ENCODE measurements at regions of chr18 and their contacts with region 1.

Region 1: DNA sequence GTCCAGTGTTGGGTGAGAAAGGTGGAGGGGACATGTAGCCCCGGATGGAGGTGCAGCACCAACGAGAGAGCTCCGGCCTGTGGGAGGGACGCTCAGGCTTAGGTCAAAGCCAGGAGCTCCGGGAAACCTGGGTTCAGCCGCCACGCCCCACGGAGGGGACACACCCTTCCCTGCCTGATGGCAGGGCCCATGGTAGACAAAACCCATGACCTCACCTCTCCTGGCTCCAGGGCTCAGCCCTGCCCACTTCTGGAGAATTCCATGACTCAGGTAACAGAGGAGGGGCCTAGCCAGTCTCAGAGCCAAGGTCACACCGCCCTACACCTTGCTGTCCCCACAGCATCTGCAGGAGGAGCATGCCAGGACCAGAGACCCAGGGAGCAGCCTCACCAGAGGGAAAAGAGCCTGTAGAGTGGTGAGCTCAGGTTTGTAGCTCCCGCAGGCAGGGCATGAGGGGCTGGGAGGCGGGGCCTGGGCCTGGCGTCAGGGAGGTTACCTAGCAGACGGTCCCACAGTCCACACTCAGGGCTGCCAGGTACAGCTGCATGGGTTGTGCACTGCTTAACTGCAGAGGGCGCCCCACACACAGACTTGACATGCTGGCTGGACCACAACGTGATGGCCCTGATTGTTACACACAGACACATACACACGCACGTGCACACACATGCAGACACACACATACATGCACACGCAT is 70.8 kb upstream of the SMAD7 start:
- DNase-seq: peak; percentile 15
- ATAC-seq: peak; percentile 87
- H3K4me3 ChIP-seq: no peak overlapping the region
- H3K27ac ChIP-seq: no peak overlapping the region
- H3K4me1 ChIP-seq: no peaks in the 10 kb centered on the region; the same call in 1 of the 2 replicates
- H3K27me3 ChIP-seq: no peaks in the 10 kb centered on the region
- CTCF ChIP-seq: peak; percentile 58 to 60 (median 59); a peak in 5 of 6 replicates
- EP300 ChIP-seq: no peak
- POLR2A ChIP-seq: no peak
- RAD21 ChIP-seq: peak; percentile 69

Region 2: DNA sequence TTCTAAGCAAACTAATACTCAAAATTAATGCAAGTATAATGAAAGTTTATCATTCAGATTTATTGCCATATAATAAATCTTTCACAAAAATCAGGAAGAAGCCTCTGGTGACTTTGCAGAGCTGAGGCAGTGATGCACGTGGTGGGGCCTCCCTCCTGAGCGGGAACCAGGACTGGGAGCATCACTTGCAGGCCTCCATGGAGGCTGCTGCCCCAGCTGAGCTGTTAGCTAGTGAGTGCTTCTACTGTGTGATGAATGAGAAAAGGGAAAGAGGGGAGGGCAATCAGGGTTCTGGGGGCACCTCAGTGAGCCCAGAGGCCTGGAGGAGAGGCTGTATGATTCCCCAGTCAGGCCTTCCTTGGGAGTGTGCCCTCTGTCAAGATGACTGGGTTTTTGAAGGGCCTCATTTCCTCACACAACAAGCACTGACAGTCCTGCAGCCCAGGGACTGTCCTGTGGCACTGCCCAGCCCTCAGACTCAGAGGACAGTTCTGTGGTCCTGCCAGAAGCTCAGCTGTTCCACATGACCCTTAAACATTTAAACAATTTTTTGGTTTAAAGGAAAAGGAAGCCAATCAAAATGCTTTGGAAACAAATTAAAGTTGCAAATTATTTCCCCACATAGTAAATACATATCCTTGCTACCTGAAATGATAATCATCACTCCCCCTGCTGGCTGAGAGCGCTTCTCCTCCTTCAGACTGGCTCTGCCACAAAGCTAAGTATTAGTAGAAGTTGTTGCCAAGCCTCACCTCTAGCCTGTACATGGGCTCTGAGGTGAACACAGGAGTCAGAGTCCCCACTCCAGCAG is 20.1 kb after region 1 on chr18:
- CTCF ChIA-PET with region 1: interaction called, 13 read pairs
- POLR2A ChIA-PET with region 1: no interaction called
- RAD21 ChIA-PET with region 1: no interaction called
- SMC1A ChIA-PET with region 1: no interaction called
- in situ Hi-C with region 1: no loop called
- intact Hi-C with region 1: no loop called
- DNase-seq: no peak
- ATAC-seq: peak; percentile 75
- H3K4me3 ChIP-seq: no peak overlapping the region
- H3K27ac ChIP-seq: no peak overlapping the region
- H3K4me1 ChIP-seq: no peaks in the 10 kb centered on the region
- H3K27me3 ChIP-seq: no peaks in the 10 kb centered on the region
- CTCF ChIP-seq: peak; percentile 49 to 56 (median 53); a peak in 5 of 6 replicates
- EP300 ChIP-seq: no peak
- POLR2A ChIP-seq: no peak
- RAD21 ChIP-seq: peak; percentile 51

Region 3: DNA sequence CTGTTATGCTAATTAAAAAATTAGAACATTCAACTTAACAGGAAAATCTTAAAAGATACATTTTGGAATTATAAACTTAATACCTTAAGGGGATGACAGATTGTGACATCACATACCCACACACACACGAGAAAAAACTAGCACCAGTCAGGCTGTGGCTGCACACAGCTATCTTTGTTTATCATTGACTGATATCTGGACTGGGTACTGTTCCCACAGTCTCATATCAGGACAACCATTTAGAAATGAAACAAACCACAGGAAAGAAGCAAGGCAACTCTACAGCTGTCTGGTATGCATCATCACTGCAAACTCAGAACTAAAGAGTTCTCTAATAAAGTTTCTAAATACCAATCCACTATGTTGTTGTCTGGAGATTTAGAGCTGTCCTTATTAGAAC is 140.0 kb after region 1 on chr18:
- CTCF ChIA-PET with region 1: interaction called, 6 read pairs
- POLR2A ChIA-PET with region 1: no interaction called
- RAD21 ChIA-PET with region 1: interaction called, 4 read pairs
- SMC1A ChIA-PET with region 1: interaction called, 12 read pairs
- in situ Hi-C with region 1: no loop called
- intact Hi-C with region 1: no loop called
- DNase-seq: peak; percentile 90
- ATAC-seq: peak; percentile 96
- H3K4me3 ChIP-seq: no peak overlapping the region
- H3K27ac ChIP-seq: peak overlapping the region; percentile 71
- H3K4me1 ChIP-seq: peaks cover 35% of the 10 kb centered on the region
- H3K27me3 ChIP-seq: no peaks in the 10 kb centered on the region
- CTCF ChIP-seq: no peak
- EP300 ChIP-seq: peak; percentile 97 to 99
- POLR2A ChIP-seq: no peak
- RAD21 ChIP-seq: no peak

Region 4: GRCh38 chr18:49178736-49179135 is 157.2 kb after region 1 on chr18:
- CTCF ChIA-PET with region 1: interaction called, 31 read pairs
- POLR2A ChIA-PET with region 1: no interaction called
- RAD21 ChIA-PET with region 1: interaction called, 7 read pairs
- SMC1A ChIA-PET with region 1: interaction called, 16 read pairs
- in situ Hi-C with region 1: no loop called
- intact Hi-C with region 1: loop called (anchors 2 kb)
- DNase-seq: no peak
- ATAC-seq: peak; percentile 71
- H3K4me3 ChIP-seq: no peak overlapping the region
- H3K27ac ChIP-seq: no peak overlapping the region
- H3K4me1 ChIP-seq: peaks cover 9% of the 10 kb centered on the region; the same call in 1 of the 2 replicates
- H3K27me3 ChIP-seq: no peaks in the 10 kb centered on the region
- CTCF ChIP-seq: peak; percentile 49 to 62 (median 56); a peak in 5 of 6 replicates
- EP300 ChIP-seq: no peak
- POLR2A ChIP-seq: no peak
- RAD21 ChIP-seq: peak; percentile 83

Region 5: DNA sequence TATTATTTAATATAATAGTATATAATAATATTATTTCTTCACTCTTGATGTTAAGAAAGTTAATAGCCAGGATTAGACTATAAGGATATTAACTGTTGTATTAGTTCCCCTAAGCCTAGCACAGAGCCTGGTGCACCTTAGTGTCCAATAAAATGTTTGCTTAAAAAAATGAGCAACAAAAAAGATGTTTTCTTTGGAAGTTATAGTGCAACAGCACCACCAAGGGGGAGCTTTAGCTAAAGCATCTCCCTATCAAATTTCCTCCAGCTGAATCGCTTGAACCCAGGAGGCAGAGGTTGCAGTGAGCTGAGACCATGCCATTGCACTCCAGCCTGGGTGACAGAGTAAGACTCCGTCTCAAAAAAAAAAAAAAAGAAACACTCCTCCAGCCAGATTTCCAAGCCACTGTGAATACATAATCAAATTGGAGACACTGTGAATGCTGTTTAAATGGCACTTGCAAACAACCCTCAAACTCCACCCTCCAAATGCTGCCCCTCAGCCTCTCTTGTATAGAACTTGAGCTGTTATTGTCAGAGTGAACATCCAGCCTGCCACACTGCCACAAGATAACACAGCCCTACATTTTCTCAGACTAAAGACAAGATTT is 217.0 kb after region 1 on chr18:
- CTCF ChIA-PET with region 1: interaction called, 5 read pairs
- POLR2A ChIA-PET with region 1: no interaction called
- RAD21 ChIA-PET with region 1: interaction called, 10 read pairs
- SMC1A ChIA-PET with region 1: interaction called, 7 read pairs
- in situ Hi-C with region 1: no loop called
- intact Hi-C with region 1: loop called (anchors 5 kb)
- DNase-seq: no peak
- ATAC-seq: no peak
- H3K4me3 ChIP-seq: no peak overlapping the region
- H3K27ac ChIP-seq: no peak overlapping the region
- H3K4me1 ChIP-seq: no peaks in the 10 kb centered on the region
- H3K27me3 ChIP-seq: no peaks in the 10 kb centered on the region
- CTCF ChIP-seq: peak; percentile 18 to 50 (median 45); a peak in 4 of 6 replicates
- EP300 ChIP-seq: no peak
- POLR2A ChIP-seq: no peak
- RAD21 ChIP-seq: peak; percentile 59

Region 6: GRCh38 chr18:49412679-49413078 is 391.1 kb after region 1 on chr18:
- CTCF ChIA-PET with region 1: interaction called, 3 read pairs
- POLR2A ChIA-PET with region 1: no interaction called
- RAD21 ChIA-PET with region 1: no interaction called
- SMC1A ChIA-PET with region 1: no interaction called
- in situ Hi-C with region 1: no loop called
- intact Hi-C with region 1: loop called (anchors 2 kb)
- DNase-seq: no peak
- ATAC-seq: no peak
- H3K4me3 ChIP-seq: no peak overlapping the region
- H3K27ac ChIP-seq: no peak overlapping the region
- H3K4me1 ChIP-seq: no peaks in the 10 kb centered on the region
- H3K27me3 ChIP-seq: no peaks in the 10 kb centered on the region
- CTCF ChIP-seq: no peak
- EP300 ChIP-seq: no peak
- POLR2A ChIP-seq: no peak
- RAD21 ChIP-seq: no peak

Measured in GM12878 (cell line).